Testis (tissue), 5 donors: ENCODE measurements at regions of chr16 and their contacts with region 1.

Region 1: DNA sequence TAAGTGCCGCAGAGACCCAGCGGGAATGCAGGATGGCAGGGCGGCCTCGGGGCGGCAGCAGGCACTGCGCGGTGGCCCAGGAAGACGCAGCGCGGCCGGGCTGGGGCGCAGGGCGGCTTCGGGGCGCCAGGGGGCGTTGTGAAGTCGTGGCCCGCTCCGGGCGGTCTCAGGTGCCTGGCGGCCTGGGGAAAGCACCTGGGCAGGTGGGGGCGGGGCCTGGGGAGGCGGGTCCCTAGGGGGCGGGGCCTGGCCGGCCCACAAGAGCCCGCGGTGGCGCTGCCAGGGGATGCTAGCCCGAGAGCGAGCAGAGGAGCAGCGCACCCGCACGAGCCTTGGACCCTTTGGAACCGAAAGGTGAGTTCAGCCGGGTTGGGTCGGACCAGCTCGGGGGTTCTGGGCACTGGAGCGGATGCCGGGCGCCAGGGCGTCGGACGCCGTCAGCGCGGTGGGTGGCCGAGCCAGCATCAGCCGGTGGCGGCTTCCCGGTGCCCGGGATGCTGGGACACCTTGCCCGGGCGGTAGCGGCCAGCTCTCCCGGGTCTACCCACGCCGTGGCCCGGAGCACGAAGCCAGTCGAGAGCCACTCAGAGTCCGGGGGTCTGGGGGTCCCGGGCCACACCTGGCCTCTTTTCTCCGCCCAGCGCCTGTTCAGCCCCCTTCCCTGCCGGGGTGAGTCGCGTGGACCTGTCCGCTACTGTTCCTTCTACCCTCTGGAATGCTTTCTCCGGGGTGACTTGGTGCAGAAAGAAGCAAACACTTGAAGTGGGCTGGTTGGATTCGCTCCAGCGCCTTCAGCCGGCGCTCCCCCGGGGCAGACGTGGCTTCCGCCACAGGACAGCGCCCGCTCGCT is at the start of gene SCNN1G:
- DNase-seq: peak; percentile 74
- H3K4me3 ChIP-seq: peak within 1 kb of the TSS; percentile 39 to 51
- H3K27ac ChIP-seq: no peak within 1 kb of the TSS
- H3K4me1 ChIP-seq: peaks cover 9% of the 10 kb centered on the region
- H3K27me3 ChIP-seq: no peaks in the 10 kb centered on the region
- CTCF ChIP-seq: peak; percentile 62 to 84 (median 69)
- POLR2A ChIP-seq: no peak
- total RNA-seq, gene SCNN1G: 0.16 to 0.19 TPM

Region 2: GRCh38 chr16:23435500-23435899 is 252.8 kb after region 1 on chr16:
- intact Hi-C with region 1: loop called (anchors 10 kb)
- DNase-seq: peak; percentile 65
- H3K4me3 ChIP-seq: no peak overlapping the region
- H3K27ac ChIP-seq: no peak overlapping the region
- H3K4me1 ChIP-seq: no peaks in the 10 kb centered on the region
- H3K27me3 ChIP-seq: no peaks in the 10 kb centered on the region
- CTCF ChIP-seq: peak; percentile 44 to 72 (median 62)
- POLR2A ChIP-seq: no peak